Caco-2 (cell line): ENCODE measurements at regions of chr17 and their contacts with region 1.

Region 1: GRCh38 chr17:9575381-9576101 is at the start of gene STX8:
- DNase-seq: peak; percentile 82 to 85
- H3K4me3 ChIP-seq: peak within 1 kb of the TSS; percentile 60
- H3K4me3 Mint-ChIP-seq: peak within 1 kb of the TSS; percentile 93
- H3K27ac Mint-ChIP-seq: peak within 1 kb of the TSS; percentile 66
- H3K4me1 ChIP-seq: 0 out of 2 replicates have a peak, but pooled peaks cover 4% of the 10 kb centered on the region
- H3K4me1 Mint-ChIP-seq: peaks cover 12% of the 10 kb centered on the region
- H3K27me3 ChIP-seq: no peaks in the 10 kb centered on the region
- H3K27me3 Mint-ChIP-seq: no peaks in the 10 kb centered on the region
- CTCF ChIP-seq: no peak
- total RNA-seq, gene STX8: 22.6 and 24.7 TPM in 2 replicates

Region 2: GRCh38 chr17:9284884-9285283 is 290.7 kb before region 1 on chr17:
- CTCF ChIA-PET with region 1: no interaction called
- POLR2A ChIA-PET with region 1: no interaction called
- intact Hi-C with region 1: no loop called
- DNase-seq: no peak
- H3K4me3 ChIP-seq: no peak overlapping the region
- H3K4me3 Mint-ChIP-seq: no peak overlapping the region
- H3K27ac Mint-ChIP-seq: no peak overlapping the region
- H3K4me1 ChIP-seq: no peaks in the 10 kb centered on the region
- H3K4me1 Mint-ChIP-seq: no peaks in the 10 kb centered on the region
- H3K27me3 ChIP-seq: no peaks in the 10 kb centered on the region
- H3K27me3 Mint-ChIP-seq: no peaks in the 10 kb centered on the region
- CTCF ChIP-seq: no peak

Region 3: DNA sequence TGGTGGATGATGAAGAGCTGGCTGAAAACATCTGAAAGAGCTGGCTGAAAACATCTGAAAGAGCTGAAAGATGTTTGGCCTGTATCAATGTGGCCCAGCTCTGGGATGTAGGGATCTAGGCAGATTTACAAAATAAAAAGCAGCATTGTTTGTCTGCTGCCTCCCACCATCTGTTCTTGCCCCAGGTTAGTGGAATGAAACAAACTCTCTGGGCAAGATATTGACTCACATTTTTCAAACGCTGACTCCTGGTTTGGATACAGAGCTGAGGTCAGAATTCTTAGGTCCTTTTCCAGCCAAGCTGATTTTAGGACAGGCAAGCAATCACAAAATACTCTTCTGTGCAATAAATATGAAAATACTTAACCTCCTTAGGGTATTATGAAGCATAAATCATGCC is 138.9 kb before region 1 on chr17:
- CTCF ChIA-PET with region 1: no interaction called
- POLR2A ChIA-PET with region 1: no interaction called
- intact Hi-C with region 1: no loop called
- DNase-seq: no peak
- H3K4me3 ChIP-seq: no peak overlapping the region
- H3K4me3 Mint-ChIP-seq: no peak overlapping the region
- H3K27ac Mint-ChIP-seq: no peak overlapping the region
- H3K4me1 ChIP-seq: no peaks in the 10 kb centered on the region
- H3K4me1 Mint-ChIP-seq: no peaks in the 10 kb centered on the region
- H3K27me3 ChIP-seq: no peaks in the 10 kb centered on the region
- H3K27me3 Mint-ChIP-seq: no peaks in the 10 kb centered on the region
- CTCF ChIP-seq: no peak

Region 4: DNA sequence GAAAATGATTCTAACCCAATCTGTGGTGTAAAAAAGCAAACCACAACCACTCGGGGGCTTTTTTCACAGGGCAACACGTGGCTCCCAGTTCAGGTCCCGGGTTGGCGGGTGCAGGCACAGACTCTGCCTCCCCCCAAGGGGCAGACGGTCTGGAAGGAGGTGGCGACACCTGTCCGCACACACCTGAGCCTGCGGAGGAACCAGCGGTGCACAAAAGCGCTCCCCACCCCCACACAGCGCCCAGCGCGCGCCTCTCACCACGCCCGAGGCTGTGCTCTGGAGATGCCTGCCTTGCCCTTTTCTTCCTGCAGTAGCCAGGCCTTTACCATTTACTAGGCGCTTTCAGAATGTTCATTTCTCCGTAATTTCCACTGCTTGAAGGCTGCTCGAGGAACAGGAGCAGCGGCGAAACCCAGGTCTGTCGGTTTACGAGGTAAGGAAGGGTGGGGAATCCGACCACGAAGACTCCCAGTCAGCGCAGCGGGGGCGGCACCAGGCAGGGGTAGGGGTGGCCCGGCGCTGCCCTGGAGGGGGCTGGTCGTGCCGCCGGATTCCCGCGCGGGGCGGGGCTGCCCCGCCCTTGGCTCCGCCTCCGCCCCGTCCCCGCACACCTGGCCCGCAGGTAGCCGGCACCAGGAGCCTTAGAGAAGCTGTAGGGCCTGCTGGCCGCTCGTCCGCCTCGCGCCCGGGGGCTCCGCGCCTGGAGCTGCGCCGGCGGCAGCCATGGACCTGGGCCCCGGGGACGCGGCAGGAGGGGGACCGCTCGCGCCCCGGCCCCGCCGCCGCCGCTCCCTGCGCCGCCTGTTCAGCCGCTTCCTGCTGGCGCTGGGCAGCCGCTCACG is 69.6 kb after region 1 on chr17 and contains the start of gene USP43:
- CTCF ChIA-PET with region 1: interaction called, 4 read pairs
- POLR2A ChIA-PET with region 1: no interaction called
- intact Hi-C with region 1: loop called (anchors 2 kb)
- DNase-seq: peak; percentile 64 to 75
- H3K4me3 ChIP-seq: peak within 1 kb of the TSS; percentile 58
- H3K4me3 Mint-ChIP-seq: peak within 1 kb of the TSS; percentile 90
- H3K27ac Mint-ChIP-seq: peak within 1 kb of the TSS; percentile 79
- H3K4me1 ChIP-seq: peaks cover 20% of the 10 kb centered on the region
- H3K4me1 Mint-ChIP-seq: peaks cover 12% of the 10 kb centered on the region
- H3K27me3 ChIP-seq: no peaks in the 10 kb centered on the region
- H3K27me3 Mint-ChIP-seq: no peaks in the 10 kb centered on the region
- CTCF ChIP-seq: no peak
- total RNA-seq, gene USP43: 6.0 and 6.5 TPM in 2 replicates

Region 5: GRCh38 chr17:9676742-9677387 is 101.3 kb after region 1 on chr17:
- CTCF ChIA-PET with region 1: interaction called, 3 read pairs
- POLR2A ChIA-PET with region 1: no interaction called
- intact Hi-C with region 1: loop called (anchors 2 kb)
- DNase-seq: no peak
- H3K4me3 ChIP-seq: no peak overlapping the region
- H3K4me3 Mint-ChIP-seq: no peak overlapping the region
- H3K27ac Mint-ChIP-seq: no peak overlapping the region
- H3K4me1 ChIP-seq: no peaks in the 10 kb centered on the region
- H3K4me1 Mint-ChIP-seq: no peaks in the 10 kb centered on the region
- H3K27me3 ChIP-seq: no peaks in the 10 kb centered on the region
- H3K27me3 Mint-ChIP-seq: no peaks in the 10 kb centered on the region
- CTCF ChIP-seq: no peak